Activated T-helper 1 cell treated with anti-CD3 and anti-CD28 coated beads, Interleukin-12 subunit alpha, Interleukin-12 subunit beta, Interleukin-2, Interleukin-4 antibody, amounts not matched to agents 30 ng/mL and 10 ng/mL and 1 ng/mL, durations not matched to agents 14 hours and 24 hours and 36 hours (primary cell): ENCODE measurements at regions of chr16 and their contacts with region 1.

Region 1: GRCh38 chr16:17238284-17239028 is 232.3 kb downstream of the XYLT1 start:
- DNase-seq: no peak
- H3K4me3 Mint-ChIP-seq: no peak overlapping the region
- H3K27ac Mint-ChIP-seq: peak overlapping the region; percentile 69
- H3K4me1 Mint-ChIP-seq: peaks cover 29% of the 10 kb centered on the region
- H3K27me3 Mint-ChIP-seq: no peaks in the 10 kb centered on the region

Region 2: GRCh38 chr16:16861546-16861945 is 376.9 kb before region 1 on chr16:
- intact Hi-C with region 1: loop called (anchors 10 kb)
- DNase-seq: peak; percentile 11
- H3K4me3 Mint-ChIP-seq: no peak overlapping the region
- H3K27ac Mint-ChIP-seq: no peak overlapping the region
- H3K4me1 Mint-ChIP-seq: no peaks in the 10 kb centered on the region
- H3K27me3 Mint-ChIP-seq: peaks cover 3% of the 10 kb centered on the region

Region 3: DNA sequence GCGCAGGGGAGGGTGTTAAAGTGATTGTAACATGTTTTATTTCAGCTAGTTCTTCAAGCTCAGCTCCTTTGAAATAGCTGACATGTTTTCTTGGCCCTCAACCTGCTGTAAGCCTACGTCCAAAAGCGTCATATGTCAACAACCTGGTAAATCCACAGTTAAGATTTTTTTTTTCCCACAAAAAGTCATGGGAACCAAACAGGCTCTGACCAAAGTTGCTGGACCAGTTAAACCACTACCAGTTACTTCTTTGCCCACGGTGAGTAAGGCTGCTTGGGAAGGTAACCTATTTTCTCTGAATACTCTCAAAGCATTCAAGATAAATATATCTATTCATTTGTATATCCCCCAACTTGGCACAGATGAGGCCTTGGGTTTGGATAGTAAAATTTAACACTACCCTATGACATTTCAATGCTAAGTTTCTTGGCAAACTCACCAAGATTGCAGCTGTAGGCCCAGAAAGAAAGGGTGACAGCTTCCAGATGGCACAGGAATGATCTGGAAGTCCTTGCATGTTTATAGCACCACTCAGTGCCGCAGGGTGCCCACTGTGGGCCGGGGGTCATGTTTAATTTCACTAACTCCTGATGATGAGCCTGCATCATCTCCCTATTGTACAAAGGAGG is 66.1 kb after region 1 on chr16:
- intact Hi-C with region 1: loop called (anchors 5 kb)
- DNase-seq: no peak
- H3K4me3 Mint-ChIP-seq: no peak overlapping the region
- H3K27ac Mint-ChIP-seq: no peak overlapping the region
- H3K4me1 Mint-ChIP-seq: peaks cover 46% of the 10 kb centered on the region
- H3K27me3 Mint-ChIP-seq: peaks cover 2% of the 10 kb centered on the region

Region 4: DNA sequence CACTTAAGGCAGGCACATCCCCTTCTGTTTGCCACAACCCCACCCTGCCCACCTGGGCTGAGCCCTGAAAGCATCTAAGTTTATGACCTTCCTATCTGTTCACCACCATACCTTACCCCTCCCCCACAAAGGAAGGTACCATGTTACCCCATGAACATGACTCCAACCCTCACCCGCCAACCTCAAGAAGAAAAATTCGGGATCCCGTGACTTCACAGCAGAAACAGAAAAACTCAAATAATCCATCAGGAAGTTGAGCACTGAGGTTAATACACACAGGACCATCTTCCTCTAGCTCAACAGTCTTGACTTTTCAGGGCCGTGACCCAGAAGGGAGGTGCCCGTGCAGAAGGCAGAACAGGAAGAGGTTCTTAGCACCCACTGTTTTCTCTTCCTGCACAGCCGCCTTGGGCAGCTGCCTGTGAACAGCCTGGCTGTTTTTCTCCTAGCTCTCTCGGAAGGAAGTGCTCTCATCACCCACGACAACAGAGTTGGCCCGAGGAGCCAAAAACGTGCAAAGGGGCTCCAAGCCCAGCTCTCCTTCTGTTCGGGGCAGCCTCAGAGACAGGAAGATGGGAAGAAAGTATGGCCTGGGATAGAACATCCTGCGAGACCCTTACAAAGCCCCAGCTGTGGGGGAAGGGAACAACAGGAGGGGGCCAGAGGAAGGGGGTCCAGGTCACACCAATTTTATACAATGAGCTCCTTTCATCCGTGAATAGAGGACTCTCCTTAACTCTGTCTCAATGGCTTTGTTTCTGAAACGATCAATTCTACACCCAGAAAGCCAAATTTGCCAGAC is 131.2 kb after region 1 on chr16:
- intact Hi-C with region 1: loop called (anchors 5 kb)
- DNase-seq: peak; percentile 72
- H3K4me3 Mint-ChIP-seq: peak overlapping the region; percentile 83
- H3K27ac Mint-ChIP-seq: peak overlapping the region; percentile 93
- H3K4me1 Mint-ChIP-seq: peaks cover 88% of the 10 kb centered on the region
- H3K27me3 Mint-ChIP-seq: no peaks in the 10 kb centered on the region

Region 5: GRCh38 chr16:17467923-17468540 is 229.6 kb after region 1 on chr16:
- intact Hi-C with region 1: loop called (anchors 1 kb)
- DNase-seq: no peak
- H3K4me3 Mint-ChIP-seq: peak overlapping the region; percentile 93
- H3K27ac Mint-ChIP-seq: peak overlapping the region; percentile 4
- H3K4me1 Mint-ChIP-seq: peaks cover 59% of the 10 kb centered on the region
- H3K27me3 Mint-ChIP-seq: no peaks in the 10 kb centered on the region